PC-9 (cell line): ENCODE measurements at regions of chr1 and their contacts with region 1.

Region 1: GRCh38 chr1:57959531-57960241 is 535.8 kb upstream of the DAB1 start:
- DNase-seq: no peak
- H3K4me3 ChIP-seq: no peak overlapping the region
- H3K27ac ChIP-seq: no peak overlapping the region
- H3K4me1 ChIP-seq: no peaks in the 10 kb centered on the region
- H3K27me3 ChIP-seq: no peaks in the 10 kb centered on the region
- CTCF ChIP-seq: no peak

Region 2: DNA sequence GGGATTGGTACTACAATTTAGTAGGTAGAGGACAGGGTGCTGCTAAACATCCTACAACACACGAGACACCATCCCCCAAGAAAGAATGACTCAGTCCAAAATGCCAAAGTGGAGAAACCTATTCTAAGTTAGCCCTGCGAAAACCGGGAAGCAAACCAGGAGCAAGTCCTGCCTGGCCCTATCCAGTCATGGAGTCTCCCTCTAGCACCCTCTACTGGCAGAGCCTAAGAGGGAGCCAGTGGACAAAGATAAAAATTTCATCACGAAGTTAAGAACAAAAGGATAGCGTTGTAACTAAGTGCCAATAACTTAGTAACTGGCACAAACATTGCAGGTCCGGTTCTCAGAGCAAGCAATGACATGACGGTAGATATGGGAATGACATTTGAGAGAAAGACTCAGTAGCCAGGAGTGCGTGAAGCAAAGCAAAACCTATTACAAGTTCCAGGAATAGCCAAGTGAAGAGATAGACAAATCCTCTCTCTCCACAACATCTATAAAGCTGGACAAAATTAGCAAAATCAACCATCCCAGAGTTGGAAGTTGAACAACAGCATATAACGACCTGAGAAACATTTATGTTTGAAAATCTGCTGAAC is 203.4 kb after region 1 on chr1:
- CTCF ChIA-PET with region 1: interaction called, 10 read pairs
- POLR2A ChIA-PET with region 1: no interaction called
- intact Hi-C with region 1: no loop called
- DNase-seq: peak; percentile 33 to 38
- H3K4me3 ChIP-seq: no peak overlapping the region
- H3K27ac ChIP-seq: no peak overlapping the region
- H3K4me1 ChIP-seq: no peaks in the 10 kb centered on the region
- H3K27me3 ChIP-seq: no peaks in the 10 kb centered on the region
- CTCF ChIP-seq: peak; percentile 74

Region 3: GRCh38 chr1:59511476-59512465 is 1552.1 kb after region 1 on chr1:
- CTCF ChIA-PET with region 1: no interaction called
- POLR2A ChIA-PET with region 1: no interaction called
- intact Hi-C with region 1: no loop called
- DNase-seq: no peak
- H3K4me3 ChIP-seq: no peak overlapping the region
- H3K27ac ChIP-seq: no peak overlapping the region
- H3K4me1 ChIP-seq: no peaks in the 10 kb centered on the region
- H3K27me3 ChIP-seq: no peaks in the 10 kb centered on the region
- CTCF ChIP-seq: no peak